GM13976 (cell line): ENCODE measurements at regions of chr2 and their contacts with region 1.

Region 1: GRCh38 chr2:210086292-210086691 is 83.9 kb downstream of the RPE start:
- DNase-seq: no peak
- CTCF ChIP-seq: no peak

Region 2: DNA sequence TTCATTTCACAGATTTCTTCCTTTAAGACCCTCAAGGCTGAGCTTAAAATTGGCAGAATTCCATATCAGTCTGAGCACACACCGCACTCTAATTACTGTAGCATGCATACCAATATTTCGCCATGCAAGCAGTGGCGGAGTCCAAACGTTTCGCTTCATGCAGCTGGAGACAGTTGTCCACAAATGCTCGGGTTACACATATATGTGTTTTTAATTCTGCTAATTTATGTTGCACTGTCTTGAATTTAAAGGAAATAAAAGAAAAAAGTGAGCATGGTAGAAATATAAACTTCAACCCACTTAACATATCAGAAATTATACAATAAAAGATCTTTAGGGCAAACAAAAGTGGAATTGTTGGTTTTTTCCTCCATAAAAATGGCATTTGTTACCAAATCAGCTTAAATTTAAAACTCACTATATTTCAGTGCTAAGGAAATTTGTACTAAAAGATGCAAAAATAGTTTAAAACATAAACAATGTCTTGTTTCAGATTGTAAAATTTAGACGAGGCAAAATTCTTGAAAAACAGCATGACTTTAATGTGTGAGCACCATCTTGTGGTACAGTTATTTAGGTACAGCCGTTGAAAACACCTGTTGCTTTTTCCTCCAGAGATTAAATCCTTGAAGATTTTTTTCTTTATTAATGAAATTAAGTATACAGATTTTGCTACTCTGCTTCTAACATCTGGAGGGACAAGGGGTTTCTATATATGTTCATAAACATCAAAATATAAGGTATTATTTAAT is 109.0 kb after region 1 on chr2:
- in situ Hi-C with region 1: loop called (anchors 10 kb)
- DNase-seq: peak; percentile 21
- CTCF ChIP-seq: peak; percentile 38